ENCODE measurements at regions of chr10 and their contacts with region 1.

Region 1: DNA sequence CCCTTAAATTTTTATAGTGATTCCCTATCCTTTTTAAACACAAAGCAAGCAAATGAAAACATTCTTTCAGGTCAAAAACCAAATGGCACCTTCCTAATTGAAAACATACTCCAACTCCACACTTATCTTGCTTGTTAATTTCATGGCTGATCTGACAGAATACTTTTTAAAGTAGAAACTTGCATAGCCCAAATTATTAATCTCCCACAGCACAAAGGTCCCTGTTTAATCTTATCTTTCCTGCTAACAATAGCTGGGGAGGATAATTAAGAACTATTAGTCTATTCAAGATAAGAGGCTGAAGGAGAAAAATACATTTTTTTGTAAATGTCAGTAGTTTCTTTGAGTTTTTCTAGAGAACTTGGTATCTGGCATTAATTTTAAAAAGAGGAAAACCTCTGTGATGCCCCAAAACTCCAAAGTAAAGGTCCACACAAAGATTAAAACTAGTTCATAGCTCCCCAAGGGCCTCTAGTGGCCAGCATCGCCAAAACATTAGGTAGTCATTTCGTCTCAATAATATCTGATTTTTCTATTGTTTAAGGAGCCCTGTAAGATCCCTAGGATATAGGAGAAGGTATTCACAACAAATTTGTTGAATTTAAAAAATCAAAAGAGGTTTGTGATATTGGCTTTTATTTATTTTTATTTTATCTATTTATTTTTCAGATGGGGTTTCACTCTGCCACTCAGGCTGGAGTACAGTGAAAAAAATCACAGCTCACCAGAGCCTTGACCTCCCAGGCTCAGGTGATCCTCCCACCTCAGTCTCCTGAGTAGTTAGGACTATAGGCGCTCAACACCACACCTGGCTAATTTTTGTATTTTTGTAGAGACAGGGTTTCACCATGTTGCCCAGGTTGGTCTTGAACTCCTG is 14.7 kb downstream of the CDNF start:
- DNase-seq: peak in 2 of 6 donors; percentile 23 to 31
- ATAC-seq: peak in 3 of 4 donors; percentile 82 to 87 (median 85)
- H3K4me3 ChIP-seq: no peak overlapping the region
- H3K27ac ChIP-seq: no peak overlapping the region
- H3K4me1 ChIP-seq: peaks cover 4 to 9% (median 8%) of the 10 kb centered on the region in 3 donors
- H3K27me3 ChIP-seq: no peaks in the 10 kb centered on the region
- CTCF ChIP-seq: peak in 2 of 4 donors; percentile 23 to 39

Region 2: GRCh38 chr10:14276210-14276609 is 546.9 kb before region 1 on chr10:
- intact Hi-C with region 1: no loop called
- DNase-seq: no peak
- ATAC-seq: no peak
- H3K4me3 ChIP-seq: no peak overlapping the region
- H3K27ac ChIP-seq: no peak overlapping the region
- H3K4me1 ChIP-seq: no peaks in the 10 kb centered on the region
- H3K27me3 ChIP-seq: no peaks in the 10 kb centered on the region
- CTCF ChIP-seq: no peak

Region 3: DNA sequence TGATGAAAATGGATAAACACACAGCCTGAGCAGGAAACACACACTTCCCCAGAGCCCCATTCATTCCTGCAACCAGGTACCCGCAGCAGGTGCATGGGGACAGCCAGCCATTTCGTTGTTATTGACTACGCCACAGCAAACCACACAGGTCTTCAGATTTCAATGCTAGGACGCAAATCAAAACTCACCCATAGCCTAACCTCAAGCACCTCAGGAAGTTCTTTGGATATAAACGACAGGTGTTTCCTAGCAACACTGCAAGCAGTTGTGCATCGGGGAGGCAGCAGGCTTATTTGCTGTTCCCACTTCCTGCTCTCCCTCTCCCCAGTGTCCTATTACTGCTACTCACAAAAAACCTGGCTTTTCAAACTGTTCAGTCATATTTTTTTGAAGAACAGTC is 315.9 kb before region 1 on chr10:
- intact Hi-C with region 1: loop called in 1 of 3 experiments (anchors 10 kb)
- DNase-seq: no peak
- ATAC-seq: peak in 1 of 4 donors; percentile 18
- H3K4me3 ChIP-seq: no peak overlapping the region
- H3K27ac ChIP-seq: no peak overlapping the region
- H3K4me1 ChIP-seq: no peaks in the 10 kb centered on the region
- H3K27me3 ChIP-seq: no peaks in the 10 kb centered on the region
- CTCF ChIP-seq: no peak

Region 4: GRCh38 chr10:14543046-14543903 is 279.8 kb before region 1 on chr10:
- intact Hi-C with region 1: loop called in 1 of 3 experiments (anchors 10 kb)
- DNase-seq: no peak
- ATAC-seq: peak; percentile 53 to 78 (median 70)
- H3K4me3 ChIP-seq: no peak overlapping the region
- H3K27ac ChIP-seq: peak overlapping the region; percentile 4 to 75 (median 48)
- H3K4me1 ChIP-seq: peaks cover 4 to 46% (median 30%) of the 10 kb centered on the region in 3 donors
- H3K27me3 ChIP-seq: no peaks in the 10 kb centered on the region
- CTCF ChIP-seq: peak in 2 of 4 donors; percentile 17 to 18

Measured in pancreas (tissue), 10 donors.